ENCODE measurements at regions of chr7 and their contacts with region 1.

Region 1: DNA sequence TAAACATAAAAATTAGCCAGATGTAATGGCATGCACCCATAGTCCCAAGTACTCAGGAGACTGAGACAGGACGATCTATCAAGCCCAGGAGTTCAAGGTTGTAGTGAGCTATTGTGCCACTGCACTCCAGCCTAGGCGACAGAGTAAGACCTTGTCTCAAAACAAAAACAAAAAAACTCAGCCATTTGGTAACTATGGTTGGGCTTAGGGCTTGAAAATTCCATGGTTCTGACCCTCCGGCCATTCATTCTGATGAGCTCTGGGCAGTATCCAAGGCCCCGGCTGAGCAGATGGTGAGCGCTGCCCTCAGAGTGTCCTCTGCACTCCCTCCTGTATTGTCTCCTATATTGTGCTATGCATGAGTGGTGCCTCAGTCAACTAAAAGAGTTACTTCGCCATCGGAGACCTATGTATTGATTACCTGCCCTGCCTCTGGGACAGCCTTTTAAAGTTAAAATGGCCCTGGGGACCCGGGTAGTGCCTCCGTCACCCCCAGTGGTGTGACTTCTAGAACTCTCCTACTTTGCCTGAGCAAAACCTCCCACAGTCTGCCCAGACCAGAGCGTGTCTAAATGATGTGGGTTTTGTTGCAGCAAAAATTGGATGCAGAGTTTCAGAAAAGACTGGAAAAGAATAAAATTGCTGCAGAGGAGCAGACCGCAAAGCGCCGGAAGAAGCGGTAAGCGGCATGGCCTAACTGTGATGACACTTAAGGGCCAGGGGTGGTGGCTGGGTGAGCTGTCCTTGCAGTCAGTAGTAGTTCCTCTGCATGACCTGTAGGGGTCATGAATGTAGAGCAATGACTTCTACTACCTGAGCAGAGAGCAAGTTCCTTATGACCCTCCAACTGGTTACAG is 8.1 kb downstream of the PRKRIP1 start:
- DNase-seq: peak in 1 of 2 experiments; percentile 55
- H3K4me3 ChIP-seq: no peak overlapping the region
- H3K27ac ChIP-seq: no peak overlapping the region
- H3K4me1 ChIP-seq: no peaks in the 10 kb centered on the region
- H3K27me3 ChIP-seq: no peaks in the 10 kb centered on the region
- CTCF ChIP-seq: peak; percentile 66 to 90 (median 71)
- EP300 ChIP-seq: no peak
- POLR2A ChIP-seq: no peak
- RAD21 ChIP-seq: peak; percentile 69 to 70

Region 2: DNA sequence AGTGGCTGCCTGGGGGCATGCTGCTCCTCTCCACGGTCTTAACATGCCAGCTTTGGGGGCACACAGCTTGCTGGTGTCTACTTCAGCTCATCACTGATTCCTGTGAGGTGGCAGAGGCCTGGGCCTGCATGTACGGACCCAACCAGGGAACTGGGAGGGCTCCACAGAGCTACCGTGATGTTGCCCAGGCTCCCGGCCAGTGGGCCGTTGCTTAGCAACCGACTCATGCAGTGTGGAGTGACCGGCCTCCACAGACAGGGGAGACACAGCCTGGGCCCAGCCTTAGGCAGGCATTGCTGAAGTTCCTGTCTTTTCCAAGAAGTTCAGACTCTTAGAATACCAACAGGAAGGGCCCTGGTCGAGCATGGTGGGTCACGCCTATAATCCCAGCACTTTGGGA is 143.4 kb before region 1 on chr7:
- CTCF ChIA-PET with region 1: no interaction called
- POLR2A ChIA-PET with region 1: no interaction called
- DNase-seq: no peak
- H3K4me3 ChIP-seq: no peak overlapping the region
- H3K27ac ChIP-seq: no peak overlapping the region
- H3K4me1 ChIP-seq: no peaks in the 10 kb centered on the region
- H3K27me3 ChIP-seq: no peaks in the 10 kb centered on the region
- CTCF ChIP-seq: no peak
- EP300 ChIP-seq: no peak
- POLR2A ChIP-seq: no peak
- RAD21 ChIP-seq: no peak

Region 3: GRCh38 chr7:102464577-102465280 is 60.5 kb after region 1 on chr7 and contains the starts of genes ALKBH4 and LRWD1:
- CTCF ChIA-PET with region 1: interaction called, 10 read pairs
- POLR2A ChIA-PET with region 1: no interaction called
- DNase-seq: peak; percentile 70 to 97
- H3K4me3 ChIP-seq: peak within 1 kb of the TSS; percentile 82 to 99 (median 88)
- H3K27ac ChIP-seq: peak within 1 kb of the TSS; percentile 12; the same call in 1 of the 2 replicates
- H3K4me1 ChIP-seq: peaks cover 0 to 10% (median 1%) of the 10 kb centered on the region in 4 experiments; a peak in 3 of 7 replicates
- H3K27me3 ChIP-seq: no peaks in the 10 kb centered on the region; a peak in 1 of 7 replicates
- CTCF ChIP-seq: peak in 2 of 3 experiments; percentile 7 to 20; a peak in 3 of 4 replicates
- EP300 ChIP-seq: no peak
- POLR2A ChIP-seq: peak in 1 of 2 experiments; percentile 60; a peak in 2 of 3 replicates
- RAD21 ChIP-seq: peak in 1 of 2 experiments; percentile 0; a peak in 2 of 4 replicates
- total RNA-seq, gene ALKBH4: 16.6 and 17.7 TPM in 2 replicates
- total RNA-seq, gene LRWD1: 26.8 and 28.5 TPM in 2 replicates

Region 4: GRCh38 chr7:103094102-103094501 is 689.9 kb after region 1 on chr7:
- CTCF ChIA-PET with region 1: no interaction called
- POLR2A ChIA-PET with region 1: no interaction called
- DNase-seq: no peak
- H3K4me3 ChIP-seq: no peak overlapping the region
- H3K27ac ChIP-seq: no peak overlapping the region
- H3K4me1 ChIP-seq: no peaks in the 10 kb centered on the region
- H3K27me3 ChIP-seq: no peaks in the 10 kb centered on the region
- CTCF ChIP-seq: no peak
- EP300 ChIP-seq: no peak
- POLR2A ChIP-seq: no peak
- RAD21 ChIP-seq: no peak; a peak in 1 of 4 replicates